ENCODE measurements at regions of chr15 and their contacts with region 1.

Region 1: GRCh38 chr15:40274350-40275274 is 8.3 kb downstream of the ANKRD63 start:
- DNase-seq: peak; percentile 70 to 97
- H3K4me3 ChIP-seq: no peak overlapping the region
- H3K27ac ChIP-seq: no peak overlapping the region
- H3K4me1 ChIP-seq: peaks cover 0 to 2% (median 1%) of the 10 kb centered on the region in 4 experiments; a peak in 5 of 7 replicates
- H3K27me3 ChIP-seq: peaks cover 0 to 8% (median under 1%) of the 10 kb centered on the region in 4 experiments; a peak in 3 of 7 replicates
- CTCF ChIP-seq: peak; percentile 100
- EP300 ChIP-seq: no peak
- POLR2A ChIP-seq: no peak
- RAD21 ChIP-seq: peak; percentile 92 to 97

Region 2: DNA sequence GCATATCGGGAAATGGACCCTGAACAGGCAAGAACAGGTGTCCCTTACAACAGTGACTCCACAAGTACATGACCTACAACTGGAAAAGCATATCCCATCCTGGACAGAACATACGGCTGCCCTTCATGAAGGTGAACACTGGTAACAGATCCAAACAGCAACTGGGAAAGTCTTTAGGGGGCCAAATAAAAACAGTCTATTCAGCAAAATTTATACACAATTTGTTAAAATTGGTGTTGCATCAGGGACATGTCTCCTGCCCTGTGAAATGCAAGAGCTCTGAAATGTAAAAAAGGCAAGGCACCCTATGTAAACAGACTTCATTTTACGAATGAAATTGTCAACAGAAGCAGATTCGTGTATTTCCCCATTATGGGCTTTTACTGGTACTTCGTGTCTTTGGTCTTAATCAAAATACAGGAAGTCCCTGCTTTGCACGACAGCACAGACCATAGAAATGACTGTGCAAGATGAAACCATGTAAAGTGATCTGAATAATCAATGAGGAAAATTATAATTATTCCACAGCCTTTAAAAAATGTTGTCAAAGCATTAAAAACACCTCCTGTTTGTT is 821.0 kb before region 1 on chr15:
- CTCF ChIA-PET with region 1: no interaction called
- POLR2A ChIA-PET with region 1: no interaction called
- DNase-seq: no peak
- H3K4me3 ChIP-seq: no peak overlapping the region
- H3K27ac ChIP-seq: no peak overlapping the region
- H3K4me1 ChIP-seq: no peaks in the 10 kb centered on the region
- H3K27me3 ChIP-seq: no peaks in the 10 kb centered on the region
- CTCF ChIP-seq: no peak
- EP300 ChIP-seq: no peak
- POLR2A ChIP-seq: no peak
- RAD21 ChIP-seq: no peak

Region 3: DNA sequence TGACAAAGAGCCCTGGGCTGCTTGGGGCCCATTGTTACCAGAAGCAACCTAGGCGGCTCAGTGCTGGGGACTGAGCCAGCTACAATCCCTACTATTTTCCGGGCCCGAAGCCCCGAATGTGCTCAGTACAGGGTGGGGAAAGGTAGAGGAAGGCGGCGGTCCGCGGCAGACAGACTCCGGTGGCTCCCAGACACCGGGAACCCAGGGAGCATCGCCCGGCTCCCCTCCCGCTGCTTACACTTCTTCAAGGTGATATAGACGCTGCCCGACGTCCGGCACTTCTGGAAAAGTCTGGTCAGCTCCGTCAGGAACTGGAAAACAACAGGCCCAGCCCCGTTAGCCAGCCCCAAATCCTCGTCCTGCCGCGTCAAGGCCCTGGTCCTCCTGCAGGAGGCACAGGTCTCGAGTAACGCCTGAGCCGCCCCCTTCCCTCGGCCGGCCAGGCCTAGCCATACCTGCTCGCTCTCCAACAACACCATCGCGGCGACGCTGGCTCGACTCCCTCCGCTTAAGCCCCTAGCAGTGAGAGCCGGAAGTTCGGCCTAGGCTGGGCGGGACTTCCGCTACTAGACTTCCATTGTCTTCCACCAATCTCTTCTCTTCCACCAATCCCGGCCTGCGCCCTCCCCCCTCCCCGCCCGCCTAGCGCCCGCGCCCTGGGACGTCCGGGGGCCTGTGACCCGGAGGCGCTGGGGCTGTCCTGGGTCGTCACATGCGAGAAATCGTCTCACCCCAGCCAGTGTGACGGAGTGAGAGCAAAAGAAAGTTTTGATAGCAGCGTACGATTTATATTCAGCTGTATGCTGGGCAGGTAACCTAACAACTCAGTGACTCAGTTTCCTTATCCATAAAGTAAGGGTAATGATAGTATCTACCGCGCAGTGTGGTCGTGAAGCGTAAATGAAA is 235.7 kb before region 1 on chr15 and contains the start of gene SRP14:
- CTCF ChIA-PET with region 1: interaction called, 25 read pairs
- POLR2A ChIA-PET with region 1: no interaction called
- DNase-seq: peak; percentile 73 to 91
- H3K4me3 ChIP-seq: peak within 1 kb of the TSS; percentile 58 to 95 (median 88)
- H3K27ac ChIP-seq: peak within 1 kb of the TSS; percentile 80
- H3K4me1 ChIP-seq: peaks cover 0 to 3% (median 0%) of the 10 kb centered on the region in 4 experiments; a peak in 2 of 7 replicates
- H3K27me3 ChIP-seq: no peaks in the 10 kb centered on the region
- CTCF ChIP-seq: no peak
- EP300 ChIP-seq: no peak
- POLR2A ChIP-seq: peak; percentile 77 to 93
- RAD21 ChIP-seq: 0 out of 4 replicates have a peak, but pooled peaks of 1 of the 2 experiments have one; percentile 2
- total RNA-seq, gene SRP14: 180 and 186 TPM in 2 replicates

Region 4: DNA sequence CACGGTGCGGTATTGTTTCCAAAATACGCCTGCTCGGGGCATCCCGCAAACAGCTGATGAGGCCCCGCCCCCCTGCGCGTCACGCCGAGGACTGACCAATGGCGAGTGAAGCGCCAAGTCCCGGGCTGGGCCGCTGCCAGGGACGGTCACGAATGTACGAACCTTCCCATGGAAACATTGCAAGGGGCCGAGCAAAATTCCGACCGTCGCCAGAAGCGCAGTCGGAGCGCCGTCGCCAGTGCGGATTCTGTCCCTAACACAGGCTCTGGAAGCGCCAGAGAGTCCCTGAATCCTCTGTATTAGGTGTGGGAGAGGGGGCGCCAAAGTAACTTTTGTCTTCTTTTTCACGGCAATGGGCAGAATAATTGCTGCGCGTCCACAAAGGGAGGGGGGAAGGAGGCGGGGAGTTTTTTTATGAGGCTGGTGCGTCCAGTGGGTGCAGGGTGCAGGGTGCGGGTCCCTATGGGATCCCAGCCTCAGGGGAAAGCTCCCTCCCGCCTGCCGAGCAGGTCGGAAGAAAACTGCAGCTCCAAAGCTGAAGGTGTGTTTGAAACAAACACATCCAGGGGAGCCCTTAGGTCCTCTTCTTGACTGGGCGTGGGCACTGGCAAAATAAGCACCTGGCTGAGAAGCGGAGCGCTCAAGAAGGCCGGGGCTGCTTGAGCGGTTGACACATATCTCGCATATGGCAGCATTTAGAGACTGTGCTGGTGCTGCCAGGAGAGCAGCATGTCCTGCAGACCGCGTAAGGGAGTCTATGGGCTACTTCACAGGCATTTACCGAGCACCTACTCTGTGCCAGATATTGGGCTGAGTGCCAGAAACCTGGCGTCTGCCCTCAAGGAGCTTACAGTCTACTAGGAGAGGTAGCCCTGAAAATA is 165.5 kb before region 1 on chr15 and contains the start of gene BMF:
- CTCF ChIA-PET with region 1: interaction called, 27 read pairs
- POLR2A ChIA-PET with region 1: interaction called, 3 read pairs
- DNase-seq: peak; percentile 98 to 100
- H3K4me3 ChIP-seq: peak within 1 kb of the TSS; percentile 71 to 92 (median 90)
- H3K27ac ChIP-seq: peak within 1 kb of the TSS; percentile 29; the same call in 1 of the 2 replicates
- H3K4me1 ChIP-seq: peaks cover 26 to 50% (median 37%) of the 10 kb centered on the region in 4 experiments
- H3K27me3 ChIP-seq: no peaks in the 10 kb centered on the region
- CTCF ChIP-seq: peak; percentile 10 to 45 (median 43); a peak in 3 of 4 replicates
- EP300 ChIP-seq: no peak
- POLR2A ChIP-seq: no peak
- RAD21 ChIP-seq: peak; percentile 24 to 48
- total RNA-seq, gene BMF: 24.2 and 30.9 TPM in 2 replicates

Region 5: GRCh38 chr15:40130799-40131502 is 143.7 kb before region 1 on chr15:
- CTCF ChIA-PET with region 1: no interaction called
- POLR2A ChIA-PET with region 1: no interaction called
- DNase-seq: no peak
- H3K4me3 ChIP-seq: no peak overlapping the region
- H3K27ac ChIP-seq: no peak overlapping the region
- H3K4me1 ChIP-seq: no peaks in the 10 kb centered on the region
- H3K27me3 ChIP-seq: no peaks in the 10 kb centered on the region
- CTCF ChIP-seq: no peak
- EP300 ChIP-seq: no peak
- POLR2A ChIP-seq: no peak
- RAD21 ChIP-seq: no peak

Region 6: GRCh38 chr15:40175160-40175559 is 99.5 kb before region 1 on chr15:
- CTCF ChIA-PET with region 1: interaction called, 15 read pairs
- POLR2A ChIA-PET with region 1: no interaction called
- DNase-seq: no peak
- H3K4me3 ChIP-seq: no peak overlapping the region
- H3K27ac ChIP-seq: no peak overlapping the region
- H3K4me1 ChIP-seq: no peaks in the 10 kb centered on the region
- H3K27me3 ChIP-seq: no peaks in the 10 kb centered on the region
- CTCF ChIP-seq: no peak
- EP300 ChIP-seq: no peak
- POLR2A ChIP-seq: no peak
- RAD21 ChIP-seq: no peak

Region 7: DNA sequence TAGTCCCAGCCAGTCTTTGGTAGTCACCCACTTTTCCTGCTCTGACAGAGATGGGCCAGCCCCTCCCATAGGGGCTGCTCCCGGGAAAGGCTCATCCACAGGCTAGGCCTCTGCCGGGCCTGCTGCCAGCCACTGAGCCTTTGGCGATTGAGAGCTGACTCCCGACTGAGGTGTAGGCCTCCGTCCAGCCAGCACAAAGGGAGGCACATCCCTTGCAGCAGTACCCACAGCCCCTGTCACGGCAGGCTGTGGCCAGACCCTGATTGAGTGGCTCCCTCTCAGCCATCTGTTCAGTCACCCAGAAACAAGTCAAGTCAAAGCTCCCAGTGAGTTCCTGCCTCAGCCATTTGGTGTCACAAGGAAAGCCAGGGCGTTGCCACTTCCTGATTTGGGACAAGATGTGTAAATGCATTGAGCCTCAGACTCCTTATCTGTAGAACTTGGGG is 42.0 kb before region 1 on chr15:
- CTCF ChIA-PET with region 1: interaction called, 1,340 read pairs
- POLR2A ChIA-PET with region 1: interaction called, 11 read pairs
- DNase-seq: peak in 1 of 2 experiments; percentile 47
- H3K4me3 ChIP-seq: no peak overlapping the region
- H3K27ac ChIP-seq: no peak overlapping the region
- H3K4me1 ChIP-seq: no peaks in the 10 kb centered on the region; a peak in 1 of 7 replicates
- H3K27me3 ChIP-seq: no peaks in the 10 kb centered on the region
- CTCF ChIP-seq: no peak
- EP300 ChIP-seq: no peak
- POLR2A ChIP-seq: no peak
- RAD21 ChIP-seq: no peak

Region 8: GRCh38 chr15:40301467-40302179 is 27.0 kb after region 1 on chr15:
- CTCF ChIA-PET with region 1: interaction called, 531 read pairs
- POLR2A ChIA-PET with region 1: interaction called, 29 read pairs
- DNase-seq: peak in 1 of 2 experiments; percentile 75
- H3K4me3 ChIP-seq: no peak overlapping the region
- H3K27ac ChIP-seq: no peak overlapping the region
- H3K4me1 ChIP-seq: peaks cover 0 to 23% (median 10%) of the 10 kb centered on the region in 4 experiments; a peak in 6 of 7 replicates
- H3K27me3 ChIP-seq: peaks cover 0 to 2% (median 0%) of the 10 kb centered on the region in 4 experiments; a peak in 1 of 7 replicates
- CTCF ChIP-seq: no peak
- EP300 ChIP-seq: no peak
- POLR2A ChIP-seq: no peak
- RAD21 ChIP-seq: no peak

Region 9: DNA sequence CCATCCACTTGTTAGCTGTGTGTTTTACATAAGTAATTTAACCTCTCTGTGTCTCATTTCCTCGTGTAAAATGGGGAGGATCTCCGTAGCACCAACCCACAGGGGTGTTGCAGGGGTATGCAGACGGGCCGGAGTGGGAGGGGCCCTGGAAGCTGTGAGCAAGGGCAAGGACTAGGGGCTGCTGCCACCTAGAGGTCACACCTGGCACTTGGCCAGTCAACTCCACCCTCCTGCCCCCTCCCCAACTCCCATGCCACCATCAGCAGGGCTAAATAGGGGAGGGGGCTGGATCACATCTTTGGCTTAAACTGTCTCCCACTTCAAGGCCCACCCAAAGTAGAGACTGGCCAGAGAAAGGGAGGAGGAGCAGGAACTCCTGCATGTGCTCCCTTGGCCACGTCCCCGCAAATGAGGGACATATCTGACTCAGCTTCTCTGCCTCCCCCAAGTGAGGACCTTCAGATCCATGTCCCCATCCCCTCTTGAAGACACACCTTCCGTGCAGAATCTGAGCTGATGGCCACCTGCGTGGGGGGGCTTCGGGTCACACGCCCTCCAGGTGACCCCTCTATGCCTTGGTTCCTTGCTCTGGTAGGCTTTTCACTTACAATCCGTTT is 63.5 kb after region 1 on chr15:
- CTCF ChIA-PET with region 1: interaction called, 295 read pairs
- POLR2A ChIA-PET with region 1: interaction called, 4 read pairs
- DNase-seq: peak in 1 of 2 experiments; percentile 93
- H3K4me3 ChIP-seq: no peak overlapping the region
- H3K27ac ChIP-seq: no peak overlapping the region
- H3K4me1 ChIP-seq: peaks cover 0 to 44% (median 28%) of the 10 kb centered on the region in 4 experiments; a peak in 6 of 7 replicates
- H3K27me3 ChIP-seq: peaks cover 0 to 4% (median under 1%) of the 10 kb centered on the region in 4 experiments; a peak in 1 of 7 replicates
- CTCF ChIP-seq: peak in 2 of 3 experiments; percentile 90 to 97; a peak in 3 of 4 replicates
- EP300 ChIP-seq: no peak
- POLR2A ChIP-seq: no peak
- RAD21 ChIP-seq: peak; percentile 87 to 88

Region 10: GRCh38 chr15:40633143-40633542 is 358.5 kb after region 1 on chr15:
- CTCF ChIA-PET with region 1: no interaction called
- POLR2A ChIA-PET with region 1: no interaction called
- DNase-seq: no peak
- H3K4me3 ChIP-seq: no peak overlapping the region
- H3K27ac ChIP-seq: no peak overlapping the region
- H3K4me1 ChIP-seq: no peaks in the 10 kb centered on the region
- H3K27me3 ChIP-seq: no peaks in the 10 kb centered on the region
- CTCF ChIP-seq: no peak
- EP300 ChIP-seq: no peak
- POLR2A ChIP-seq: no peak
- RAD21 ChIP-seq: no peak

Measured in H1 (cell line).